GM12878 (cell line): ENCODE measurements at regions of chr3 and their contacts with region 1.

Region 1: GRCh38 chr3:48556793-48557626 is at the start of gene PFKFB4:
- DNase-seq: peak; percentile 99
- ATAC-seq: peak; percentile 93
- H3K4me3 ChIP-seq: peak within 1 kb of the TSS; percentile 91
- H3K27ac ChIP-seq: peak within 1 kb of the TSS; percentile 78
- H3K4me1 ChIP-seq: peaks cover 47% of the 10 kb centered on the region
- H3K27me3 ChIP-seq: no peaks in the 10 kb centered on the region
- CTCF ChIP-seq: peak in 1 of 3 experiments; percentile 11; a peak in 2 of 6 replicates
- EP300 ChIP-seq: no peak; a peak in 1 of 4 replicates
- POLR2A ChIP-seq: peak; percentile 77
- RAD21 ChIP-seq: no peak
- polyA plus RNA-seq, gene PFKFB4: 0.37 to 0.53 TPM

Region 2: GRCh38 chr3:48273594-48274211 is 283.3 kb before region 1 on chr3:
- CTCF ChIA-PET with region 1: no interaction called
- POLR2A ChIA-PET with region 1: no interaction called
- RAD21 ChIA-PET with region 1: interaction called, 3 read pairs
- SMC1A ChIA-PET with region 1: interaction called, 3 read pairs
- in situ Hi-C with region 1: no loop called
- intact Hi-C with region 1: loop called (anchors 5 kb)
- DNase-seq: peak; percentile 30
- ATAC-seq: peak; percentile 91
- H3K4me3 ChIP-seq: no peak overlapping the region
- H3K27ac ChIP-seq: no peak overlapping the region
- H3K4me1 ChIP-seq: no peaks in the 10 kb centered on the region
- H3K27me3 ChIP-seq: no peaks in the 10 kb centered on the region
- CTCF ChIP-seq: peak; percentile 73 to 85 (median 76)
- EP300 ChIP-seq: no peak
- POLR2A ChIP-seq: no peak
- RAD21 ChIP-seq: peak; percentile 84

Region 3: DNA sequence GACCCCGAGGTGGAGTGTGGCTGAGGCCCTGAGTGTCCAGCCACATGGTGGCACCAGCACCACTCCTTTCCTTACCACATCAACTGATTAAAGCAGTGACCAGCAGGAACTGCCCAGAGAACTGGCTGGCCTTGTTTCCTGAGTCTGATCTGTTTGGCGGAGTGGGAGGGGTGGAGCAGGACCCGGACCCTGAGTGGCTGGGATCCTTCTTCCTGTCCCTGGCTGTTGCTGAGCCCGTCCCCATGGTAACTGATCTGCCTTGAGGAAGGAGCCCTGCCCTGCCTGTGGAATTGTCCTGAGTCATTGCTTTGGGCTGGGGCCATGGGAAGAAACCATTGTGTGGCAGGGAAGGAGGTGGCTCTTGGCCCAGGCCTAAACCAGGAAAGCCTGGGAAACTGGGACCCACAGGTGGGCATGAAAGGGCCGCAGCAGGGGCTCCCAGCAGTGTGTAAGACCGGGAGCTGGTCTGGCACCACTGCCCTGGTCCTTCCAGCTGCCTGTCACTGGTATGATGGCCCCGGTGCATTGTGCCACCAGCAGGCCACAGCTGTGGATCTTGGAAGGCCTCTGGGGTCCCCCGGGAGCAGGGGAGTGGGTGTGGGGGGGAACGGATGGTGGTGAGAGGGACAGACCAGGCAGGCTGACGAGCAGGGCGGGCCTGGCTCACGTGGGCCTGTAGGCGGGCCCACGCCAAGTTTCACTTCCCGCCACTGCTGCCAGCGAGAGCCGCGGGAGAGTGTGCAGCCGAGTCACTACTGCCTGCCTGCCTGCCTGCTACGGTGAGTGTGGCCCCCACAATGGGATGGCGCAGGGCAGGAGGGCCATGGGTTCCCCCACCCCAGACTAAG is 91.3 kb before region 1 on chr3:
- CTCF ChIA-PET with region 1: interaction called, 16 read pairs
- POLR2A ChIA-PET with region 1: interaction called, 91 read pairs
- RAD21 ChIA-PET with region 1: interaction called, 17 read pairs
- SMC1A ChIA-PET with region 1: interaction called, 22 read pairs
- in situ Hi-C with region 1: no loop called
- intact Hi-C with region 1: no loop called
- DNase-seq: no peak
- ATAC-seq: peak; percentile 94
- H3K4me3 ChIP-seq: peak overlapping the region; percentile 88
- H3K27ac ChIP-seq: peak overlapping the region; percentile 96
- H3K4me1 ChIP-seq: peaks cover 41% of the 10 kb centered on the region
- H3K27me3 ChIP-seq: no peaks in the 10 kb centered on the region
- CTCF ChIP-seq: peak; percentile 52 to 67 (median 56); a peak in 5 of 6 replicates
- EP300 ChIP-seq: no peak
- POLR2A ChIP-seq: peak; percentile 98
- RAD21 ChIP-seq: peak; percentile 64

Region 4: GRCh38 chr3:48507351-48508061 is 49.5 kb before region 1 on chr3:
- CTCF ChIA-PET with region 1: no interaction called
- POLR2A ChIA-PET with region 1: interaction called, 11 read pairs
- RAD21 ChIA-PET with region 1: interaction called, 4 read pairs
- SMC1A ChIA-PET with region 1: no interaction called
- in situ Hi-C with region 1: no loop called
- intact Hi-C with region 1: no loop called
- DNase-seq: no peak
- ATAC-seq: peak; percentile 90
- H3K4me3 ChIP-seq: no peak overlapping the region
- H3K27ac ChIP-seq: no peak overlapping the region
- H3K4me1 ChIP-seq: peaks cover 6% of the 10 kb centered on the region
- H3K27me3 ChIP-seq: no peaks in the 10 kb centered on the region
- CTCF ChIP-seq: peak; percentile 80 to 83 (median 81); a peak in 5 of 6 replicates
- EP300 ChIP-seq: no peak
- POLR2A ChIP-seq: no peak
- RAD21 ChIP-seq: peak; percentile 91

Region 5: DNA sequence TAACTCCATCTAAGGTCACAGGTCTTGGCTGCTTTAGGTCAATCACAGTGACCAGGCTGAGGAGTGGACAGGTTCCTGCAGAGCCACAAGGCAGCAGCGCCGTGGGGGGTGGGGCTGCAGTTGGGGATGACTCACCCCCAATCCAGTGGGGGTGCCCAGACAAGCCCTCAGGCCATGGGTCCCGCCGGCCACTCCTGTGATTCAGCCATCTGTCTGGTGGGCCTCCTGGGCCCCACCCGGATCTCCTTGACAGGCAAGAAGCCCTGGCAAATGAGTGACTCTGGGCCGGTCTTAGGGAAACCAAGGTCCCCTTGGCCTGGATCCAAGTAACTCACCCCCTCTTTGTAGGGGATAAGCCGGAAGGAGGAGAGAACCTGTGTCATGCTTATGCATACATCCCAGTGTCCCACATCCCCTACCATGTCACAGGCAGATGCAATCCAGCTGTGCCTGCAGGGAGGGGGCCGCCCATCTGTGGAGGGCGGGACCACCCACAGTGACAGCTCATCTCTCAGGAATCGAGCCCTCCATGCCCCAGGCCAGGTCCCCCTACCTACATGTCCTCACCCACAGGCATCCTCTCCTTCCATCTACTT is 38.6 kb after region 1 on chr3:
- CTCF ChIA-PET with region 1: no interaction called
- POLR2A ChIA-PET with region 1: no interaction called
- RAD21 ChIA-PET with region 1: no interaction called
- SMC1A ChIA-PET with region 1: no interaction called
- in situ Hi-C with region 1: no loop called
- intact Hi-C with region 1: no loop called
- DNase-seq: no peak
- ATAC-seq: peak; percentile 41; the same call in 2 of the 3 replicates
- H3K4me3 ChIP-seq: no peak overlapping the region
- H3K27ac ChIP-seq: no peak overlapping the region
- H3K4me1 ChIP-seq: no peaks in the 10 kb centered on the region; the same call in 1 of the 2 replicates
- H3K27me3 ChIP-seq: peaks cover 0 to 9% of the 10 kb centered on the region in 2 experiments; a peak in 2 of 4 replicates
- CTCF ChIP-seq: no peak
- EP300 ChIP-seq: no peak
- POLR2A ChIP-seq: no peak
- RAD21 ChIP-seq: no peak